Ascending aorta (tissue), 2 donors: ENCODE measurements at regions of chr6 and their contacts with region 1.

Region 1: GRCh38 chr6:3251462-3252314 is 7.1 kb upstream of the PSMG4 start:
- DNase-seq: peak in 1 of 2 donors; percentile 91
- H3K4me3 ChIP-seq: no peak overlapping the region
- H3K27ac ChIP-seq: no peak overlapping the region
- H3K4me1 ChIP-seq: peaks cover 0 to 4% of the 10 kb centered on the region in 2 donors
- H3K27me3 ChIP-seq: no peaks in the 10 kb centered on the region
- CTCF ChIP-seq: peak; percentile 89 to 97 (median 96)

Region 2: GRCh38 chr6:3209114-3210023 is 42.3 kb before region 1 on chr6:
- intact Hi-C with region 1: no loop called
- DNase-seq: peak in 1 of 2 donors; percentile 70
- H3K4me3 ChIP-seq: no peak overlapping the region
- H3K27ac ChIP-seq: peak overlapping the region; percentile 15 to 64
- H3K4me1 ChIP-seq: peaks cover 3 to 27% of the 10 kb centered on the region in 2 donors
- H3K27me3 ChIP-seq: no peaks in the 10 kb centered on the region
- CTCF ChIP-seq: no peak

Region 3: DNA sequence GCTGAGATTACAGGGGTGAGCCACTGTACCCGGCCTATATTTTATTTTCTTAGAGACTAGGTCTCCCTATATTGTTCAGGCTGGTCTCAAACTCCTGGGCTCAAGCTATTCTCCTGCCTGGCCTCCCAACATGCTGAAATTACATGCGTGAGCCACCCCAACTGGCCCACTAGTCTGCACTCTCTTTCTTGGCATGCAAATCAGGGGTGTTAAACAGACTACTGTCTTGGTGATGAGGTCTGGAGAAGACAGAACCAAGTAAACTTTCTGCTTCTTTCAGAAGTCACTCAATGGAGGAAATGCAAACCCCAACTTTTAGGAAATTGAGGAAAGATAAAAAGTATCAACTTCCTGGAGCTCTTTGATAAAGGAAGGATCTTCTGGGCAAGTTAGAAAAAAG is 16.2 kb before region 1 on chr6:
- intact Hi-C with region 1: loop called (anchors 2 kb)
- DNase-seq: no peak
- H3K4me3 ChIP-seq: no peak overlapping the region
- H3K27ac ChIP-seq: no peak overlapping the region
- H3K4me1 ChIP-seq: peaks cover 0 to 13% of the 10 kb centered on the region in 2 donors
- H3K27me3 ChIP-seq: peaks cover 7% of the 10 kb centered on the region
- CTCF ChIP-seq: no peak